ENCODE measurements at regions of chr6 and their contacts with region 1.

Region 1: DNA sequence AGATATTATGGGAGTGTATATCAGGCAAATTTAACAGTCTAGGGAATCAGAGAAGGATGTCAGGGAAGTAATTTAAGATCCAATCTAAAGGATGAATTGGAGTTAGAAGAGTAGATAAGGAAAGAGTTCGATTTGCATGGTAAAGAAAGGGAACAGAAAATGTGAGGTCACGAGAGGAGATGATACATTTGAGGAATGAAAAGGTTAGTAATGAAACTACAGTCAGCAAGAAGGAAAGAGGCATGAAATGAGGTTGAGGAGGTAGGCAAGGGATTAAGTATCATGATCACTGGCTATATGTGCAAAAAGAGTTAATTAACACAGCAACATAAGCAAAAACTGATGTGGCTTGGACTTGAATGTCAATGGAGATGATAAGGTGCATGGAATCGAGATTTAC is 22.4 kb downstream of the ZNF318 start:
- DNase-seq: no peak
- H3K4me3 Mint-ChIP-seq: no peak overlapping the region
- H3K27ac Mint-ChIP-seq: no peak overlapping the region
- H3K4me1 Mint-ChIP-seq: no peaks in the 10 kb centered on the region
- H3K27me3 Mint-ChIP-seq: no peaks in the 10 kb centered on the region
- CTCF ChIP-seq: no peak

Region 2: DNA sequence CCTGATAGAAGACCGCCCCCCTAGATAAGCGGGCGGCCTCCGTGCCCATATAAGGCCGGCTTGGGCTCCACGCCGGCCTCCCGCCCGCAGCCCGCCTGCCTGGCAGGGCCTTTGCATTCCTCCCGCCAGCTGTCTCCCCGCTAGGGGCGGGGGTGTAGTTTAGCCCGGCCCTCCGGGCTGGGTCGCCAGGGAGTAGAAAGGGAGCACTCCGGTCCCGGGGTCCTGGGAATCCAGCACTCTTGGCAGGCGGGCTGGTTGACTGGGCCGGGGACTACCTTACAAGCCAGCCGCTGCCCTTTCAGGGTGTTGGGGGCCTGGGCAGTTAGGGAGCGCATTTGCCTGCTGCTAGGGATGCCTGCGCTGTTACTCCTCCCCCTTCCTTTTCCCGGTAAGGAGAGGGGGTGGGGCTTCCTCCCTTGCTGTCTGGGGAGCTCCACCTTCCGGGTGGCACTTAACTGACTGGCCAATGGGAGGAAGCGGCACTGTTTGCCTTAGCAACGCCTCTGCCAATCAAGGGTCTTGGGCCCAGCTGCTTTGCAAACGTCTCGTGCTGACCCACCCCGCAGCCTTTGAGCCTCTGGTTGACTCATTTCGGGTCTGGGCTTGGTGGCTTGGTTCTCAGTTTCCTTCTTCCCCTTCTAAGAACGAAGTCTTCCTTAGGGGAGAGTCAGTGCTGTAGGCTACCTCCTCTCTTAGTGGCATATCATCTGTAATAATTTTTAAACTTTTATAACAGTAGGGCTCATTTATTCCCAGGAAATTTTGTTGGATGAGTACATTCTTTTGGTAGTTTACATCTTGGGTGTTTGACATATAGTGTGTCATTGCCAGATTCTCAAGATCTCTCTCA is 172.5 kb before region 1 on chr6:
- CTCF ChIA-PET with region 1: no interaction called
- intact Hi-C with region 1: no loop called
- DNase-seq: peak; percentile 99
- H3K4me3 Mint-ChIP-seq: peak overlapping the region; percentile 92
- H3K27ac Mint-ChIP-seq: peak overlapping the region; percentile 94
- H3K4me1 Mint-ChIP-seq: peaks cover 35% of the 10 kb centered on the region
- H3K27me3 Mint-ChIP-seq: no peaks in the 10 kb centered on the region
- CTCF ChIP-seq: no peak

Region 3: GRCh38 chr6:43221046-43221972 is 125.7 kb before region 1 on chr6:
- CTCF ChIA-PET with region 1: interaction called, 11 read pairs
- intact Hi-C with region 1: no loop called
- DNase-seq: no peak
- H3K4me3 Mint-ChIP-seq: no peak overlapping the region
- H3K27ac Mint-ChIP-seq: no peak overlapping the region
- H3K4me1 Mint-ChIP-seq: peaks cover 25% of the 10 kb centered on the region
- H3K27me3 Mint-ChIP-seq: no peaks in the 10 kb centered on the region
- CTCF ChIP-seq: no peak

Measured in Calu3 (cell line).